ENCODE measurements at regions of chr2 and their contacts with region 1.

Region 1: GRCh38 chr2:61470965-61471904 is at the start of gene USP34:
- DNase-seq: peak; percentile 96 to 97
- H3K4me3 ChIP-seq: peak within 1 kb of the TSS; percentile 96
- H3K4me3 Mint-ChIP-seq: peak within 1 kb of the TSS; percentile 100
- H3K27ac Mint-ChIP-seq: peak within 1 kb of the TSS; percentile 100
- H3K4me1 ChIP-seq: peaks cover 16% of the 10 kb centered on the region
- H3K4me1 Mint-ChIP-seq: peaks cover 9% of the 10 kb centered on the region
- H3K27me3 ChIP-seq: no peaks in the 10 kb centered on the region
- H3K27me3 Mint-ChIP-seq: no peaks in the 10 kb centered on the region
- CTCF ChIP-seq: no peak
- total RNA-seq, gene USP34: 100 and 101 TPM in 2 replicates

Region 2: GRCh38 chr2:61288070-61288841 is 183.0 kb before region 1 on chr2:
- CTCF ChIA-PET with region 1: no interaction called
- POLR2A ChIA-PET with region 1: no interaction called
- intact Hi-C with region 1: loop called (anchors 10 kb)
- DNase-seq: peak in 1 of 2 experiments; percentile 26
- H3K4me3 ChIP-seq: no peak overlapping the region
- H3K4me3 Mint-ChIP-seq: no peak overlapping the region
- H3K27ac Mint-ChIP-seq: peak overlapping the region; percentile 86
- H3K4me1 ChIP-seq: peaks cover 6% of the 10 kb centered on the region; the same call in 1 of the 2 replicates
- H3K4me1 Mint-ChIP-seq: no peaks in the 10 kb centered on the region
- H3K27me3 ChIP-seq: no peaks in the 10 kb centered on the region
- H3K27me3 Mint-ChIP-seq: no peaks in the 10 kb centered on the region
- CTCF ChIP-seq: no peak

Region 3: GRCh38 chr2:61426267-61426897 is 44.9 kb before region 1 on chr2:
- CTCF ChIA-PET with region 1: no interaction called
- POLR2A ChIA-PET with region 1: no interaction called
- intact Hi-C with region 1: loop called (anchors 2 kb)
- DNase-seq: peak; percentile 58 to 59
- H3K4me3 ChIP-seq: no peak overlapping the region
- H3K4me3 Mint-ChIP-seq: no peak overlapping the region
- H3K27ac Mint-ChIP-seq: no peak overlapping the region
- H3K4me1 ChIP-seq: peaks cover 8% of the 10 kb centered on the region
- H3K4me1 Mint-ChIP-seq: peaks cover 27% of the 10 kb centered on the region
- H3K27me3 ChIP-seq: no peaks in the 10 kb centered on the region
- H3K27me3 Mint-ChIP-seq: no peaks in the 10 kb centered on the region
- CTCF ChIP-seq: peak; percentile 71 to 76

Measured in Caco-2 (cell line).